CD14-positive monocyte (primary cell): ENCODE measurements at regions of chr17 and their contacts with region 1.

Region 1: GRCh38 chr17:42577532-42578281 is at the start of gene PSMC3IP:
- DNase-seq: peak; percentile 97 to 98 (median 98)
- H3K4me3 ChIP-seq: peak within 1 kb of the TSS; percentile 34 to 75 (median 36)
- H3K4me3 Mint-ChIP-seq: peak within 1 kb of the TSS; percentile 85 to 97
- H3K27ac ChIP-seq: peak within 1 kb of the TSS; percentile 78 to 92
- H3K27ac Mint-ChIP-seq: peak within 1 kb of the TSS; percentile 97 to 100 (median 99)
- H3K4me1 ChIP-seq: peaks cover 22 to 27% of the 10 kb centered on the region in 2 donors
- H3K4me1 Mint-ChIP-seq: peaks cover 37% of the 10 kb centered on the region
- H3K27me3 ChIP-seq: no peaks in the 10 kb centered on the region
- H3K27me3 Mint-ChIP-seq: peaks cover 0 to 2% (median 0%) of the 10 kb centered on the region in 3 donors
- CTCF ChIP-seq: no peak
- polyA plus RNA-seq, gene PSMC3IP: 1.2 TPM in 1 of 3 donors, not detected in the others

Region 2: DNA sequence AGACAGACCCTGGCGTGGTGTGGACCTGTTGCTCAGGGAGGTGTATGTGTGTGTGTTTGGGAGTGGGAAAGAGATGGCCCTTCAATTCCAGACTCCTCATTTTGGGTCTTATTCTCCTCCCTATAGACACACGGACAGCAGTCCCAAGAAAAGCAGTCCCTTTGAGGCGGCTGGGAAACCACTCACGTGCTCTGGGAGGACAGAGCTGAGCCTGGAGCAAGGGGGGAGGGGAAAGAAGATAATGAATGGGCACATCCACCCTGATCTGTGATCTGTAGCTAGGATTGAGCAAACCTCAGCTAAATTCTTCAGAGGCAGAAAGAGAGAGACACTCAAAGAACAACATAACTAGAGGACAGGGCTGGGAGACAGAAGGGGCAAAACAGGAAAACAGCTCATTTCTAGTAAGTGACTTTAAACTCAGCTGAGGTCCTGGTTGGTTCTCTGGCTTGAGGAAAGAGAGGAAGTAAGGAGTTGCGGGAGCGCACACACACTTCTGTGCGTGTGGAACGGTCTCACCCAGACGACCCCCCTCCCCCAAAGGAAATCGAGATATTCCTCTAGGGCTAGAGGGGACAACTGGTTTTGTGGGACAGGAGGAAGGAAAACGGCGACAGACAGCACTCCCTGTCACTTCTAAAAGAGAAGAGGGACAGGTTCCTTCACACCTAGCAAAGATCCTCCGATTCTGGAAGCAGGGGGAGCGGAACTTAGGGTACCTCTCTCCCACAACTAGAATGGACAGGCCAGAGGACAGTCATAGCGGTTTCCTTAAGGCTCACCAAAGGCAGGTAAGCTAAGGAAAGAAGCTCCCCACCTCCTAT is 423.6 kb before region 1 on chr17:
- intact Hi-C with region 1: loop called in 1 of 2 experiments (anchors 5 kb)
- DNase-seq: peak; percentile 48 to 76 (median 69)
- H3K4me3 ChIP-seq: peak overlapping the region; percentile 84 to 89 (median 88)
- H3K4me3 Mint-ChIP-seq: peak overlapping the region; percentile 93 to 97
- H3K27ac ChIP-seq: peak overlapping the region; percentile 78 to 87
- H3K27ac Mint-ChIP-seq: peak overlapping the region; percentile 88 to 97 (median 93)
- H3K4me1 ChIP-seq: peaks cover 19 to 34% of the 10 kb centered on the region in 2 donors
- H3K4me1 Mint-ChIP-seq: peaks cover 36% of the 10 kb centered on the region
- H3K27me3 ChIP-seq: no peaks in the 10 kb centered on the region
- H3K27me3 Mint-ChIP-seq: peaks cover 0 to 2% (median 0%) of the 10 kb centered on the region in 3 donors
- CTCF ChIP-seq: no peak

Region 3: DNA sequence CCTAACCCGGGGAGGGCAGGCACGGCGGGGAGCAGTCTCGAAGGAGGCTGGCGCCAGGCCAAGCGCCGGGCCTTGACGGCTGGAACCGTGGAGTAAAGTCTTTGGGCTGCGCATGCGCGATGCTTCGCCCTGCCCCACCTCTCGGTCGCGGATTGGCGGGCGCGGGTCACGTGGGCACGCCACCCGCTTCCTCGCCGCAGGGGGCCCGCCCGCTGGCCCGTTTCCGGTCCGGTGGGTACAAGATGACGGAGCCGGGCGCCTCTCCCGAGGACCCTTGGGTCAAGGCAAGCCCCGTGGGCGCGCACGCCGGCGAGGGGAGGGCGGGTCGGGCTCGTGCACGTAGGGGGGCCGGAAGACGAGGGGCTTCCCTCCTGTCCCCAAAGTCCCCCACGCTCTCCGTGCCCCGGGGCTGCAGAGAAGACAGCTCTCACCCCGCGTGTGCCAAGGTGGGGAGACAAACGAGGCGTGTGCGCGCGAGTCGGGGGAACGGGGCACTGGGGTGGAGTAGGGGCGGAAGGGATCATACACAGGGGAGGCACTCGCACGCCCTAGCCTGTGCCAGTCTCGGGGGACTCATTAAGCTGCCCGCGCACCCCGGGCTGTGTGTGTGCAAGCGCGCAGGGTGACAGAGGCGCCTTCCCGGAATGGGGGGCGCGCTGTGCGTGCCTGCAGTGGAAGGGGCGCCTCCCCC is 10.7 kb before region 1 on chr17 and contains the start of gene MLX:
- intact Hi-C with region 1: loop called in 1 of 2 experiments (anchors 1 kb)
- DNase-seq: peak; percentile 88 to 94 (median 90)
- H3K4me3 ChIP-seq: peak within 1 kb of the TSS; percentile 94 to 97 (median 97)
- H3K4me3 Mint-ChIP-seq: peak within 1 kb of the TSS; percentile 93 to 96
- H3K27ac ChIP-seq: peak within 1 kb of the TSS; percentile 84 to 94
- H3K27ac Mint-ChIP-seq: peak within 1 kb of the TSS; percentile 85 to 97 (median 95)
- H3K4me1 ChIP-seq: peaks cover 39 to 51% of the 10 kb centered on the region in 2 donors
- H3K4me1 Mint-ChIP-seq: peaks cover 36% of the 10 kb centered on the region
- H3K27me3 ChIP-seq: no peaks in the 10 kb centered on the region
- H3K27me3 Mint-ChIP-seq: peaks cover 0 to 1% (median 0%) of the 10 kb centered on the region in 3 donors
- CTCF ChIP-seq: no peak
- polyA plus RNA-seq, gene MLX: 61.4 to 106 (median 63.5) TPM

Region 4: DNA sequence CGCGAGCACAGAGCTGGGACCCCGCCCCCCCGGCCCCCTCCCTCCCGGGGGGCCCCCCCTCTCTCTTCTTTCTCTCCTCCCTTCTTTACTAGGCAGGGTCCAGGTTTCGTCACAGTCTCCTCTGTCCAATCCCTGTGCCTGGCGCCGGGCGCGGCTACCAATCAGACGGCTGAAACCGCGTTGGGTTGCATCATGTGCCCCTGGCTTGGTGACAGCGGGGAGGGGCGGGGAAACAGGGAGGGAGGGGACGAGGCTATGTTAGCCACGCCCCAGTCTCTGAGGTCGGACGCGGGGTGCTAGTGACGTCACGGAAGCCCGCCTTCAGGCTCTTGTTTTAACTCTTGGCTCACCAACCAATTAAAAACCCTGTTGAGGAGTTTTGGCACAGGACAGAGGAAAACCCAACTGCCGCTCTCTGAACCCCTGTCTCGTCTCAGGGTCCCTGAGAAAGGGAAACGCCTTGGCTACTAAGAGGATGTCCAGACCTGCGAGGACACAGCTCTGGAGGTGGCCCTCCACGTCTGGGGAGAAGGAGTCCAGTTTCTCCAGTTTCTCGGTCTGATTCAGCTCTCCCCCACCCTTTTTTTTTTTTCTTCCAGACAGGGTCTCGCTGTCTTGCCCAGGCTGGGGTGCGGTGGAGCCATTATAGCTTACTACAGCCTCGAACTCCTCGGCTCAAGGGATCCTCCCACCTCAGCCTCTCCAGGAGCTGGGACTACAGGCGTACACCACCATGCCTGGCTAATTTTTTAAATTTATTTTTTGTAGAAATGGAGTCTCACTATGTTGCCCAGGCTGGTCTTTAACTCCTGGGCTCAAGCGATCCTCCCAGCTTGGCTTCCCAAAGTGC is 99.5 kb after region 1 on chr17:
- intact Hi-C with region 1: loop called (anchors 5 kb)
- DNase-seq: peak; percentile 99 to 100 (median 99)
- H3K4me3 ChIP-seq: peak overlapping the region; percentile 52 to 75 (median 66)
- H3K4me3 Mint-ChIP-seq: peak overlapping the region; percentile 74 to 83
- H3K27ac ChIP-seq: peak overlapping the region; percentile 57 to 89
- H3K27ac Mint-ChIP-seq: peak overlapping the region; percentile 82 to 94 (median 91)
- H3K4me1 ChIP-seq: peaks cover 73 to 81% of the 10 kb centered on the region in 2 donors
- H3K4me1 Mint-ChIP-seq: peaks cover 61% of the 10 kb centered on the region
- H3K27me3 ChIP-seq: peaks cover 33 to 55% of the 10 kb centered on the region in 2 donors
- H3K27me3 Mint-ChIP-seq: peaks cover 43 to 68% (median 62%) of the 10 kb centered on the region in 3 donors
- CTCF ChIP-seq: no peak

Region 5: GRCh38 chr17:42760652-42761581 is 183.2 kb after region 1 on chr17 and contains the start of gene RAMP2:
- intact Hi-C with region 1: loop called in 1 of 2 experiments (anchors 2 kb)
- DNase-seq: no peak
- H3K4me3 ChIP-seq: peak within 1 kb of the TSS in 1 of 3 experiments; percentile 59
- H3K4me3 Mint-ChIP-seq: peak within 1 kb of the TSS in 1 of 2 donors; percentile 78
- H3K27ac ChIP-seq: no peak within 1 kb of the TSS
- H3K27ac Mint-ChIP-seq: peak within 1 kb of the TSS in 1 of 7 donors; percentile 8
- H3K4me1 ChIP-seq: peaks cover 21% of the 10 kb centered on the region in 2 donors
- H3K4me1 Mint-ChIP-seq: peaks cover 18% of the 10 kb centered on the region
- H3K27me3 ChIP-seq: peaks cover 30 to 39% of the 10 kb centered on the region in 2 donors
- H3K27me3 Mint-ChIP-seq: peaks cover 46 to 63% (median 50%) of the 10 kb centered on the region in 3 donors
- CTCF ChIP-seq: no peak
- polyA plus RNA-seq, gene RAMP2: not detected